Natural killer cell (primary cell): ENCODE measurements at regions of chr4 and their contacts with region 1.

Region 1: DNA sequence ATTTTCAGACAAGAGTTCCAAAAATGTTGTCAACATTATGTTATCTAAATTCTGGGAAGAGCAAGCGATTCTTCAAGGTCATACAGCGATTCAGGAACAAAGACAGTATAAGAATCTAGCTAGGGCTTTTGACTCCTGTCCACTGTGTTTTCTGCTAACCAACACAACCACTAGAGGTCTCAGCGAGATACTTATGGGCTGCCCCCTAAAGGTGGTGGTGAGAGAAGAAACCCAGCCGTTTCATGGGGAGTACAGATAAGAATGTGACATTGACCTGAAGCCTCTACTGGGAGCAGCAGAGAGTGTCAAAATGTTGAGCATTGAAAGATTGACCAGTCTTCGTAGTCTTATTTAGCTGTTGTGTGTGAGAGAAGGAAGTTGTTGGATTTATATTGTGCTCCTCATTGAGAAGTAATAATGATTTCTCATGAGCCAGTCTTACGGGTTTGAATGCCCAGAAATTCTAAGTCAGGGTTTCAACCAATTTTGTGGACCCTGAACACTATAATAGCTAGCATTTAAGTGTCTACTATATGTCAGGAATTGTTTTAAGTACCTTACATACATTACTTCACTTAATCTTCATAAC is 168.3 kb downstream of the SPRY1 start:
- DNase-seq: peak; percentile 29 to 78
- ATAC-seq: peak; percentile 92 to 100 (median 100)
- H3K4me3 ChIP-seq: no peak overlapping the region
- H3K4me3 Mint-ChIP-seq: no peak overlapping the region
- H3K27ac ChIP-seq: no peak overlapping the region
- H3K27ac Mint-ChIP-seq: peak overlapping the region in 1 of 2 donors; percentile 47
- H3K4me1 ChIP-seq: no peaks in the 10 kb centered on the region
- H3K4me1 Mint-ChIP-seq: peaks cover 6 to 7% of the 10 kb centered on the region in 2 donors
- H3K27me3 ChIP-seq: no peaks in the 10 kb centered on the region
- H3K27me3 Mint-ChIP-seq: no peaks in the 10 kb centered on the region
- CTCF ChIP-seq: peak; percentile 92

Region 2: DNA sequence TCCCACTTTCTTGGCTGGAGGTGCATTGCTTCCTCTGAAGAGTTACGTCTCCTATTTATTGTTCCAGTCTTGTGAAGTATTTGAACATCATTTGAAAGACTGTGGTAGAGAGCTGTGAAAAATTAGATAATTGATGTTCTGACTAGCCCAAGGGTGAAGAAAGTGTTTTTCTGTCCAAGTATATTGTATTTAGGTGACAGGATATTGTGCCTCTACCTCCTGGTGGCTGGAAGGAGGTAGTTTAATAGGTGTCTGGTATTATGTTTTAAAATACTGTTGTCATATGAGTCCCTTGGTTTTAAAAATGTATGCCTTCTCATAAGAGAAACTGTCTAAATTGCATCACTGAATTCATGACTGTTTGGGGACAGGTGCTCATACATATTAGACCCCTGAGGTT is 57.7 kb after region 1 on chr4:
- intact Hi-C with region 1: loop called (anchors 2 kb)
- DNase-seq: peak in 1 of 2 donors; percentile 14
- ATAC-seq: peak; percentile 54 to 60 (median 60)
- H3K4me3 ChIP-seq: no peak overlapping the region
- H3K4me3 Mint-ChIP-seq: peak overlapping the region; percentile 4
- H3K27ac ChIP-seq: no peak overlapping the region
- H3K27ac Mint-ChIP-seq: peak overlapping the region; percentile 6 to 71
- H3K4me1 ChIP-seq: peaks cover 17% of the 10 kb centered on the region
- H3K4me1 Mint-ChIP-seq: peaks cover 45 to 46% of the 10 kb centered on the region in 2 donors
- H3K27me3 ChIP-seq: no peaks in the 10 kb centered on the region
- H3K27me3 Mint-ChIP-seq: no peaks in the 10 kb centered on the region
- CTCF ChIP-seq: no peak

Region 3: GRCh38 chr4:123661080-123661737 is 96.4 kb after region 1 on chr4:
- intact Hi-C with region 1: loop called (anchors 2 kb)
- DNase-seq: peak in 1 of 2 donors; percentile 35
- ATAC-seq: no peak
- H3K4me3 ChIP-seq: no peak overlapping the region
- H3K4me3 Mint-ChIP-seq: no peak overlapping the region
- H3K27ac ChIP-seq: no peak overlapping the region
- H3K27ac Mint-ChIP-seq: no peak overlapping the region
- H3K4me1 ChIP-seq: no peaks in the 10 kb centered on the region
- H3K4me1 Mint-ChIP-seq: peaks cover 0 to 5% of the 10 kb centered on the region in 2 donors
- H3K27me3 ChIP-seq: no peaks in the 10 kb centered on the region
- H3K27me3 Mint-ChIP-seq: peaks cover 4 to 14% of the 10 kb centered on the region in 2 donors
- CTCF ChIP-seq: peak; percentile 65

Region 4: GRCh38 chr4:123821861-123822260 is 257.0 kb after region 1 on chr4:
- intact Hi-C with region 1: no loop called
- DNase-seq: no peak
- ATAC-seq: no peak
- H3K4me3 ChIP-seq: no peak overlapping the region
- H3K4me3 Mint-ChIP-seq: no peak overlapping the region
- H3K27ac ChIP-seq: no peak overlapping the region
- H3K27ac Mint-ChIP-seq: no peak overlapping the region
- H3K4me1 ChIP-seq: no peaks in the 10 kb centered on the region
- H3K4me1 Mint-ChIP-seq: no peaks in the 10 kb centered on the region
- H3K27me3 ChIP-seq: no peaks in the 10 kb centered on the region
- H3K27me3 Mint-ChIP-seq: peaks cover 4 to 13% of the 10 kb centered on the region in 2 donors
- CTCF ChIP-seq: no peak